Posterior cingulate gyrus (tissue), 11 donors: ENCODE measurements at regions of chr11 and their contacts with region 1.

Region 1: GRCh38 chr11:112844517-112844916 is 116.7 kb upstream of the NCAM1 start:
- DNase-seq: peak; percentile 73 to 98 (median 86)

Region 2: GRCh38 chr11:112881461-112881860 is 36.9 kb after region 1 on chr11:
- intact Hi-C with region 1: loop called (anchors 5 kb)
- DNase-seq: peak; percentile 92 to 99 (median 94)

Region 3: DNA sequence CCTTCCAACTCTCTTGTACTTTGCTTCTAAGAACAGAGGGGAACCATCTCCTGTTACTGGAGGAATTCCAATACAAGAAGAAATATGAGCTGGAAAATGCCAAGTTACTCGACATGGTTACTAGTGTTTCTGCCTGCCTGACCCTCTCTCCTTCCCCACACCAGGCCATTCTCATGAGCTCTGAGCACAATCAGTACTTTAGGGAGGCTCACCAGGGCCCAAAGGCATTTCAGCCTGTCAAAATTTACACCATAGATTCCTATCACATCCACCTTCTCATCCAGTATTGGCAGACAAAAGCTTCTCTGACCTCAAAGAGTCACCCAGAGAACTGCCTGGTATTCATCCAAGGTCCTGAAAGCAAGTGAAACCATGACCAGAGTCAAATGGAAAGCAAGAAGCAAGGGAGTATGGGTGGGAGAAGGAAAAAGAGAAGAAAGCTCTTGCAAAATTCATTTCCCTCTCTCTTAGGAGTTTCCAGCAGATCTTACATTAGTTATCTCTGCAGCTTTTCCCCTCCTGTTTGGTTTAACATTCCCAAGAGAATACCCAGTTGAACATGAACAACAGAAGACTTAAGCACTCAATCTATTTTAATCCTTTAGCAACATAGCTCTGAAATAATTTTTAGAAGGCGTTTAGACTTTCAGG is 58.0 kb after region 1 on chr11:
- intact Hi-C with region 1: loop called (anchors 2 kb)
- DNase-seq: no peak